Activated CD4-positive, alpha-beta memory T cell treated with anti-CD3 and anti-CD28 coated beads, Interleukin-2, amount 10 ng/mL, durations not matched to agents 7 days and 5 days (primary cell): ENCODE measurements at regions of chr19 and their contacts with region 1.

Region 1: GRCh38 chr19:40305403-40305802 is 20.3 kb upstream of the AKT2 start:
- DNase-seq: peak; percentile 83
- H3K4me3 Mint-ChIP-seq: no peak overlapping the region
- H3K27ac Mint-ChIP-seq: no peak overlapping the region
- H3K4me1 Mint-ChIP-seq: peaks cover 3% of the 10 kb centered on the region
- H3K27me3 Mint-ChIP-seq: no peaks in the 10 kb centered on the region

Region 2: DNA sequence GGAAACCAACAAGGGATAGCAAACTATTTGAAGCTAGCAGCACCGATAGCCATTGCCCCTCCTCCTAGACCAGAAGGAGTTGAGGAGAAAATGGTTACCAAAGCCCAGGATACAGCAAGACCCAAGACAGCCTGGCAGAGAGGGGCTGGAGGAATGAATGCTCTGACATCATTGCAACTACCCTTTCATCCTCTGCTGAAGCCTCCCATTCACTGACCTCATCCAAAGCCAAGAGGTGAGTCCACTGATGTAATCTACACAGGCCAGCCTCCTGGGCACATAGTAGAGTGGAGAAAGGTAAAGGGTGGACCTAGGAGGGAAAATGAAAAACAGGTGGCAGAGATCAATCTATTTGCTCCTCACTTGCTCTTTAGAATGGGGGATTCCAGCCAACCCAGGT is 171.9 kb before region 1 on chr19:
- CTCF ChIA-PET with region 1: no interaction called
- POLR2A ChIA-PET with region 1: no interaction called
- DNase-seq: no peak
- H3K4me3 Mint-ChIP-seq: no peak overlapping the region
- H3K27ac Mint-ChIP-seq: no peak overlapping the region
- H3K4me1 Mint-ChIP-seq: no peaks in the 10 kb centered on the region
- H3K27me3 Mint-ChIP-seq: peaks cover 39% of the 10 kb centered on the region

Region 3: GRCh38 chr19:40283414-40284250 is 21.8 kb before region 1 on chr19:
- CTCF ChIA-PET with region 1: interaction called, 16 read pairs
- POLR2A ChIA-PET with region 1: no interaction called
- DNase-seq: no peak
- H3K4me3 Mint-ChIP-seq: peak overlapping the region; percentile 94
- H3K27ac Mint-ChIP-seq: peak overlapping the region; percentile 94
- H3K4me1 Mint-ChIP-seq: peaks cover 57% of the 10 kb centered on the region
- H3K27me3 Mint-ChIP-seq: no peaks in the 10 kb centered on the region

Region 4: GRCh38 chr19:40381321-40381720 is 75.9 kb after region 1 on chr19:
- CTCF ChIA-PET with region 1: interaction called, 10 read pairs
- POLR2A ChIA-PET with region 1: no interaction called
- DNase-seq: no peak
- H3K4me3 Mint-ChIP-seq: no peak overlapping the region
- H3K27ac Mint-ChIP-seq: no peak overlapping the region
- H3K4me1 Mint-ChIP-seq: peaks cover 2% of the 10 kb centered on the region
- H3K27me3 Mint-ChIP-seq: peaks cover 6% of the 10 kb centered on the region

Region 5: DNA sequence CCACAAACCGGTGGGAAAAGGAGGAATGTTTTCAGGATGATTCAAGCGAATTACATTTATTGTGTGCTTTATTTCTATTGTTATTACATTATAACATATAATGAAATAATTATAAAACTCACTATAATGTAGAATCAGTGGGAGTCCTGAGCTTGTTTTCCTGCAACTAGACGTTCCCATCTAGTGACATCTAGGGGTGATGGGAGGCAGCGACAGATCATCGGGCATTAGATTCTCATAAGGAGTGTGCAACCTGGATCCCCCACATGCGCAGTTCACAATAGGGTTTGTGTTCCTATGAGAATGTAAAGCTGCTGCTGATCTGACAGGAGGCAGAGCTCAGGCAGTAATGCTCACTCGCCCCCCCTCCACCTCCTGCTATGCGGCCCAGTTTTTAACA is 215.9 kb after region 1 on chr19:
- CTCF ChIA-PET with region 1: interaction called, 11 read pairs
- POLR2A ChIA-PET with region 1: no interaction called
- DNase-seq: no peak
- H3K4me3 Mint-ChIP-seq: no peak overlapping the region
- H3K27ac Mint-ChIP-seq: no peak overlapping the region
- H3K4me1 Mint-ChIP-seq: peaks cover 3% of the 10 kb centered on the region
- H3K27me3 Mint-ChIP-seq: peaks cover 23% of the 10 kb centered on the region

Region 6: DNA sequence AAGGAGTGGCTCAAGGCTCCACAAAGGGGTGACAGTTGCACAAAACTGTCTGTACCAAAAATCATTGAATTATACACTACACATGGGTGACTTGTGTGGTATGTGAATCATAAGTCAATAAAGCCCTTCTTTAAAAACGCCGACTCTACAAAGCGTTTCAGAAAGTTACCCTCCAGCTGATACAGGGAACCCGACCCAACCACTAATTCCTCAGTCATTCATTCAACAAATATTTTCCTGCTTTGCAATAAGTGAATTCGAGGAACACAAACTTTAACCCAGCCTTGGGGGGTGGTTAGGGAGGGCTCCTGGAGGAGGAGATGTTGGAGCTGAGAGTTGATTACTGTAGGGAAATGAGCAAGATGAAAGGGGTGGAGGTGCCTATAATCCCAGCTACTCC is 327.8 kb after region 1 on chr19:
- CTCF ChIA-PET with region 1: interaction called, 17 read pairs
- POLR2A ChIA-PET with region 1: no interaction called
- DNase-seq: no peak
- H3K4me3 Mint-ChIP-seq: no peak overlapping the region
- H3K27ac Mint-ChIP-seq: no peak overlapping the region
- H3K4me1 Mint-ChIP-seq: peaks cover 9% of the 10 kb centered on the region
- H3K27me3 Mint-ChIP-seq: peaks cover 7% of the 10 kb centered on the region